Mammary epithelial cell (primary cell): ENCODE measurements at regions of chr15 and their contacts with region 1.

Region 1: GRCh38 chr15:39195988-39196486 is 384.8 kb upstream of the THBS1 start:
- DNase-seq: peak; percentile 100
- H3K4me3 ChIP-seq: no peak overlapping the region
- H3K27ac ChIP-seq: peak overlapping the region; percentile 90
- H3K4me1 ChIP-seq: peaks cover 81% of the 10 kb centered on the region
- H3K27me3 ChIP-seq: no peaks in the 10 kb centered on the region
- CTCF ChIP-seq: no peak

Region 2: DNA sequence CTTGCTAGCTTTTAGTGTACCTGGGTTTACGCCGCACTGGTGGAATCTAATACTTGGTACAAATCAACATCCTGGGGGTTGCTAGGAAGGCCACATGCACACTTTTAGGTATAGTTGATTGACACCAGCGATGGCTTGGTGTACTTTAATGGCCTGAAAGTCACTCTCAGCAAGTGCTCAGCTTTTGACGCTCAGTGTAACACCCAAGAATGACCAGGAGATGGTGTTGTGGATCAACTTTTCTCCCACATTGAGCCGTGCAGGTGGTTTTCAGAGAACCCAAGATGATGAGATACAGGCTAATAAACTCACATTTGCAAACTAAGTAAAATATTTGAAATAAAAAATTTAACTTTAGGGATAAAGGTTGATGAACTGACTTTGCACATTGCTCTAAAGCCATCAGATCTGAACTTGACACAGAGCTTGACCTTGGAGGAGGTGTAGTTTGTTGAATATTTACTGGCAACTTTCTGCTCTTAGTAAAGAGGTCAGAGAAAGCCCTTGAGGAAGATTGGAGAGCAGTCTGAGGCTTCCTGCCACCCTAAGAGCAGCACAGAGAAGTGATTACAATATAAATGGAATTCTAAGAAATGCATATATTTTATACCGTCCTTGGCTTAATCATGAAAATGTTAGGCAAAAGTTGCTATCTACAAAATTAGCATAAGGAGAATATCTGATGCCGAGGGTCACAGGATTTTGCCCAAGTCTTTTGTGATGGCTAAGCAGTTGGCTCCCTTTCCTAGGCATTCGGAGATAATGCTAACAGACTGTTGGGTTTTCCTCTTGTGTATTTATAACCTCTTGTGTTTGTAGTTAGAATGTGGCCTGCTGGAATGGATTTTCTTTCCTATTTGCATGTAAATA is 488.0 kb before region 1 on chr15:
- CTCF ChIA-PET with region 1: interaction called, 4 read pairs
- dilution Hi-C with region 1: no loop called
- in situ Hi-C with region 1: no loop called
- intact Hi-C with region 1: loop called (anchors 1 kb)
- DNase-seq: peak; percentile 52
- H3K4me3 ChIP-seq: no peak overlapping the region
- H3K27ac ChIP-seq: no peak overlapping the region
- H3K4me1 ChIP-seq: no peaks in the 10 kb centered on the region
- H3K27me3 ChIP-seq: no peaks in the 10 kb centered on the region
- CTCF ChIP-seq: peak; percentile 74 to 78

Region 3: DNA sequence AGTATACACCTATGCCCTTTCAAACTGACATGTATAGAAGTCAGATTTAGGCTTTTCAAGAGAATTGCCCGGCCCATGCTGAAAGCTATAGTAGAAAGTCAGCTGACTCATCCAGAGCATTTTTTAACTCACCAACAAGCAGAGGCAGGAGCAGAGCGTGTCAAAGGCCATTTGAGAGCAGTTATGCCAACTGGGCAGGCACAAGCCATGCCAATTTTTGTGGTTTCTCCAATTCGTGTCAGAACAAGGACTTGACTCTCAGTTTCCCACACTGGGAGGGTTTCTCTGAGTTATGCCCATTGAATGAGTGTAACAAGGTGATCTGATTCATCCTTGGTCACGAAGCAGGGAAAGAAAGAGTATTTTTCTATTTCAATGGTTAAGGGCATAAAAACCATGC is 18.5 kb before region 1 on chr15:
- CTCF ChIA-PET with region 1: interaction called, 6 read pairs
- dilution Hi-C with region 1: no loop called
- in situ Hi-C with region 1: no loop called
- intact Hi-C with region 1: loop called (anchors 1 kb)
- DNase-seq: peak; percentile 100
- H3K4me3 ChIP-seq: no peak overlapping the region
- H3K27ac ChIP-seq: peak overlapping the region; percentile 96
- H3K4me1 ChIP-seq: peaks cover 67% of the 10 kb centered on the region
- H3K27me3 ChIP-seq: no peaks in the 10 kb centered on the region
- CTCF ChIP-seq: no peak

Region 4: DNA sequence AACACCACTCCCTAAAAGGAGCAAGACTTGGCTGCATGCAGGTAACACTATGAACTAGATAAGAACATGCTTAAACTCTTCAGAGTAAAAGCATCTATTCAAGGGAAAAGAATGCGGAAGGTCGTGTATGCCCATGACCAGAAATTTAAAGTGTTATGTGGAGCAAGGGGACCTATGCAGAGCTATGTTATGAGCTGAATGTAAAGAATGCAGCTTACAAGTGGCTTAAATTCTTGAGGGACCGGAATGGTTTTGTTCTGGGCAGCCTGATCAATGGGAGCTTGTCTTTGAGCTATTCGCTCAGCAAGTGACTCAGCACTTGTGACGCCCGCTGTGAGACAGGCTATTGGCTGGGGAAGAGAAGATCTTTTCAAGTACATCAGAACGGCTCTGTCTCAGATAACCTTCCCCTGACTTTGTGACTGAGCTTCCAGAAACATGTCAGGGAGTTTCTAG is 17.4 kb after region 1 on chr15:
- CTCF ChIA-PET with region 1: no interaction called
- dilution Hi-C with region 1: no loop called
- in situ Hi-C with region 1: no loop called
- intact Hi-C with region 1: no loop called
- DNase-seq: peak; percentile 98
- H3K4me3 ChIP-seq: no peak overlapping the region
- H3K27ac ChIP-seq: peak overlapping the region; percentile 77
- H3K4me1 ChIP-seq: peaks cover 13% of the 10 kb centered on the region
- H3K27me3 ChIP-seq: no peaks in the 10 kb centered on the region
- CTCF ChIP-seq: no peak

Region 5: GRCh38 chr15:39235092-39235795 is 39.2 kb after region 1 on chr15:
- CTCF ChIA-PET with region 1: no interaction called
- dilution Hi-C with region 1: loop called (anchors 5 kb)
- in situ Hi-C with region 1: no loop called
- intact Hi-C with region 1: loop called (anchors 2 kb)
- DNase-seq: peak; percentile 89
- H3K4me3 ChIP-seq: no peak overlapping the region
- H3K27ac ChIP-seq: peak overlapping the region; percentile 88
- H3K4me1 ChIP-seq: peaks cover 64% of the 10 kb centered on the region
- H3K27me3 ChIP-seq: no peaks in the 10 kb centered on the region
- CTCF ChIP-seq: no peak

Region 6: GRCh38 chr15:39242345-39242744 is 46.3 kb after region 1 on chr15:
- CTCF ChIA-PET with region 1: no interaction called
- dilution Hi-C with region 1: loop called (anchors 5 kb)
- in situ Hi-C with region 1: no loop called
- intact Hi-C with region 1: no loop called
- DNase-seq: peak; percentile 90
- H3K4me3 ChIP-seq: no peak overlapping the region
- H3K27ac ChIP-seq: no peak overlapping the region
- H3K4me1 ChIP-seq: peaks cover 33% of the 10 kb centered on the region
- H3K27me3 ChIP-seq: no peaks in the 10 kb centered on the region
- CTCF ChIP-seq: no peak

Region 7: DNA sequence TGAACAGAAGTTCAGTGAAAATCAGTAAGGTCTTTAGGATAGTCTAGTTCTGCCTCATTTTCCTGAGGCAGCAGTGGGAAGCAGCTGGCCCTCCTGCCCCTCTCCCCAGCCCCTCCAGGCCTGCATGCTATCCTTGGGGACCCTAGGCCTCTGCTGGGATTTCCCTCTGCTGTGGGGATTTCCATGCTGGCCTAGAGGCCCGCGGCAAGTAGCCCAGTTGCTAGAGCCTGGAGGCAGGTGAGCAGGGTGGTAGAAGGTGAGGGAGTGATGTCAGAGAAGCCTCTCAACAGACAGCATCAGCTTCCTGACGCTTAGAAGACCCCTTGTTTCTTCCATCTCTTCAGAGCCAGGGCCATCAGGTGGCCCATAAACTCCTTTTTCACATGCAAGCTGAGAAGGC is 79.0 kb after region 1 on chr15:
- CTCF ChIA-PET with region 1: no interaction called
- dilution Hi-C with region 1: no loop called
- in situ Hi-C with region 1: no loop called
- intact Hi-C with region 1: no loop called
- DNase-seq: no peak
- H3K4me3 ChIP-seq: no peak overlapping the region
- H3K27ac ChIP-seq: no peak overlapping the region
- H3K4me1 ChIP-seq: peaks cover 20% of the 10 kb centered on the region
- H3K27me3 ChIP-seq: no peaks in the 10 kb centered on the region
- CTCF ChIP-seq: no peak

Region 8: DNA sequence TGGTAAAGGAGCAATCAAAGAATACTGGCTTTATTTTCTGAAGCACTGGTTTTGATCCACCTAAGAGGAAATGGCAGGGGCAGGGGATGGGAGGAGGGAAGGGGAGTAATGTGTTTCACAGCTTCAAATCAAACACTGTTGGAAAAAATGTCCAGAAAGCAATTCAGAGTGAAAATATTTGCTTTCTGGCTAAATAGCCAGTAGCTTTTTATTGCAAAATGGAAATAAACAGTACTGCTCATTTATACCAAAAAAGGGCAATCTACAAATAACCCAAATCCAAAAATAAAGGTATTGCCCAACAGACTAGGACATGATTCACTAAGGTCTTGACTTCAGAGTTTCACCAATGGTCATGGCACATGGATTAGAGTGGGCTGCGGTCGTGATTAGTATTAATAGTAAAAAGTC is 105.6 kb after region 1 on chr15:
- CTCF ChIA-PET with region 1: no interaction called
- dilution Hi-C with region 1: loop called (anchors 5 kb)
- in situ Hi-C with region 1: no loop called
- intact Hi-C with region 1: loop called (anchors 5 kb)
- DNase-seq: peak; percentile 20
- H3K4me3 ChIP-seq: no peak overlapping the region
- H3K27ac ChIP-seq: peak overlapping the region; percentile 43
- H3K4me1 ChIP-seq: peaks cover 67% of the 10 kb centered on the region
- H3K27me3 ChIP-seq: no peaks in the 10 kb centered on the region
- CTCF ChIP-seq: no peak

Region 9: GRCh38 chr15:39327005-39327730 is 131.1 kb after region 1 on chr15:
- CTCF ChIA-PET with region 1: no interaction called
- dilution Hi-C with region 1: no loop called
- in situ Hi-C with region 1: no loop called
- intact Hi-C with region 1: no loop called
- DNase-seq: no peak
- H3K4me3 ChIP-seq: no peak overlapping the region
- H3K27ac ChIP-seq: no peak overlapping the region
- H3K4me1 ChIP-seq: peaks cover 13% of the 10 kb centered on the region
- H3K27me3 ChIP-seq: no peaks in the 10 kb centered on the region
- CTCF ChIP-seq: no peak

Region 10: DNA sequence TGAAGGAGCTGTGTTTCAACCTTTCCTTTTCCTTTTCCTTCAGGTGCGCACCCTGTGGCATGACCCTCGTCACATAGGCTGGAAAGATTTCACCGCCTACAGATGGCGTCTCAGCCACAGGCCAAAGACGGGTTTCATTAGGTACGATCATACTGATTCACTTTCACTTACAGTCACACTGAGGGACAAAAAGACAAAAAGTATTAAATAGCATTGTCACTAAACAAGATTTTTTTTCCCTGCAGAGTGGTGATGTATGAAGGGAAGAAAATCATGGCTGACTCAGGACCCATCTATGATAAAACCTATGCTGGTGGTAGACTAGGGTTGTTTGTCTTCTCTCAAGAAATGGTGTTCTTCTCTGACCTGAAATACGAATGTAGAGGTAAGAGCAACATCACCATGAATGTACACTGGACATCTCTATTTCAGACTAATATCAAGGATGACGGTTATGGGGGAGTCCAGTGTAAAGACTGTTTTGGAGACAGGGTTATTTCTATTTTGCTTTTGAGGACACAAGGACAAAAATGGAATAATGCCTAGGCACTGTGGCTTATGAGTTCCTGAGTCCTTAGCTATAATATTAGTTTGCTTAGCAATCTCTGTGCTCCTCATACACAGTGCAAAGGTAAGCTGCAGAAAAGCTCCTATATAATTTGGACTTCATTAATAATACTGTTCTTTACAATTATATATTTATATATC is 398.2 kb after region 1 on chr15:
- CTCF ChIA-PET with region 1: no interaction called
- dilution Hi-C with region 1: no loop called
- in situ Hi-C with region 1: no loop called
- intact Hi-C with region 1: no loop called
- DNase-seq: peak; percentile 24
- H3K4me3 ChIP-seq: no peak overlapping the region
- H3K27ac ChIP-seq: no peak overlapping the region
- H3K4me1 ChIP-seq: peaks cover 4% of the 10 kb centered on the region
- H3K27me3 ChIP-seq: no peaks in the 10 kb centered on the region
- CTCF ChIP-seq: peak in 1 of 2 donors; percentile 21